T-cell (primary cell): ENCODE measurements at regions of chr1 and their contacts with region 1.

Region 1: GRCh38 chr1:181088079-181089016 is at the start of gene IER5:
- DNase-seq: peak; percentile 83 to 97 (median 89)
- ATAC-seq: peak; percentile 73 to 87 (median 82)
- H3K4me3 ChIP-seq: peak within 1 kb of the TSS; percentile 66 to 91
- H3K4me3 Mint-ChIP-seq: peak within 1 kb of the TSS; percentile 89 to 99 (median 96)
- H3K27ac ChIP-seq: peak within 1 kb of the TSS; percentile 96
- H3K27ac Mint-ChIP-seq: peak within 1 kb of the TSS; percentile 97 to 98
- H3K4me1 ChIP-seq: peaks cover 8 to 19% of the 10 kb centered on the region in 2 experiments
- H3K4me1 Mint-ChIP-seq: peaks cover 48 to 56% (median 51%) of the 10 kb centered on the region in 3 donors
- H3K27me3 ChIP-seq: no peaks in the 10 kb centered on the region
- H3K27me3 Mint-ChIP-seq: no peaks in the 10 kb centered on the region
- total RNA-seq, gene IER5: 26.6 to 85.5 (median 32.2) TPM

Region 2: GRCh38 chr1:179129702-179130473 is 1958.5 kb before region 1 on chr1:
- CTCF ChIA-PET with region 1: no interaction called
- POLR2A ChIA-PET with region 1: interaction called in 1 of 2 experiments, 18 read pairs
- DNase-seq: peak in 26 of 35 experiments; percentile 2 to 76 (median 18)
- ATAC-seq: peak; percentile 92 to 97 (median 96)
- H3K4me3 ChIP-seq: peak overlapping the region in 1 of 2 donors; percentile 49
- H3K4me3 Mint-ChIP-seq: peak overlapping the region; percentile 51 to 77 (median 62)
- H3K27ac ChIP-seq: peak overlapping the region; percentile 94
- H3K27ac Mint-ChIP-seq: peak overlapping the region; percentile 91 to 92
- H3K4me1 ChIP-seq: peaks cover 6 to 15% of the 10 kb centered on the region in 2 experiments
- H3K4me1 Mint-ChIP-seq: peaks cover 16 to 23% (median 20%) of the 10 kb centered on the region in 3 donors
- H3K27me3 ChIP-seq: no peaks in the 10 kb centered on the region
- H3K27me3 Mint-ChIP-seq: no peaks in the 10 kb centered on the region

Region 3: DNA sequence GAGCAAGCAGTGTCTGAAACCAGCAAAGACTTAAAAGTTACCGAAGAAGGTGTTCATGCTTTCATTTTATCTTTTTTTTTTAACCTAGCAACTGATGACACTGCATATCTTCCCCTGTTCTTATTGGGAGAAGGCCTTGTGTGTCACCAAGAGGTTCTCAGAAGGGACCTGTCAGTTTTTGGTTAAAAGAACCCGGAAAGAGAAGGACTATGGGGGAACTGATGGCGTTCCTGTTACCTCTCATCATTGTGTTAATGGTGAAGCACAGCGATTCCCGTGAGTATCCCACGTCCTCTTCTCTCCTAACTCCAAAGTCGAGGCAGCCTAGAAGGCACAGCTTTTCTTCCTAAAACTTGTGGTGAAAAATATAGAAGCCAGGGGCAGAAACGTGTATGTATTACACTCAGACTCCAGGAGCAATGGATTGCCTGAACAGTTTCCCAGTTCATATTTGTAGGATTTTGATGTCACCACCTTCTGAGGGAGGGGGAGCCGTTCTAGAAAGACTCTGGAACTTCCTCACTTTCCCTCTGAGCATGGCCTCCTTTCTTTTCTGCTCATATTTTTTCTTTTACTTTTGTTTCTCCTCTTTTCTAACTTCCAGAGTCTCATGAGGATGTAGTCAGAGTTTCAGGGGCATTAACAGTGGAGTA is 54.4 kb before region 1 on chr1 and contains the start of gene MR1:
- CTCF ChIA-PET with region 1: interaction called, 3 to 7 read pairs
- POLR2A ChIA-PET with region 1: interaction called, 3 to 17 read pairs
- DNase-seq: peak in 30 of 35 experiments; percentile 10 to 89 (median 32)
- ATAC-seq: peak; percentile 97 to 98 (median 98)
- H3K4me3 ChIP-seq: peak within 1 kb of the TSS; percentile 63 to 87
- H3K4me3 Mint-ChIP-seq: peak within 1 kb of the TSS; percentile 94 to 99 (median 95)
- H3K27ac ChIP-seq: peak within 1 kb of the TSS; percentile 94
- H3K27ac Mint-ChIP-seq: peak within 1 kb of the TSS; percentile 99 to 100
- H3K4me1 ChIP-seq: peaks cover 31 to 46% of the 10 kb centered on the region in 2 experiments
- H3K4me1 Mint-ChIP-seq: peaks cover 60 to 67% (median 60%) of the 10 kb centered on the region in 3 donors
- H3K27me3 ChIP-seq: no peaks in the 10 kb centered on the region
- H3K27me3 Mint-ChIP-seq: no peaks in the 10 kb centered on the region
- total RNA-seq, gene MR1: 18.3 to 30.7 (median 22.7) TPM

Region 4: GRCh38 chr1:181105134-181106021 is 17.0 kb after region 1 on chr1:
- CTCF ChIA-PET with region 1: interaction called, 9 to 33 read pairs
- POLR2A ChIA-PET with region 1: interaction called, 27 to 147 read pairs
- DNase-seq: peak; percentile 86 to 97 (median 92)
- ATAC-seq: peak; percentile 90 to 94 (median 92)
- H3K4me3 ChIP-seq: peak overlapping the region; percentile 58 to 83
- H3K4me3 Mint-ChIP-seq: peak overlapping the region; percentile 77 to 86 (median 85)
- H3K27ac ChIP-seq: peak overlapping the region; percentile 87
- H3K27ac Mint-ChIP-seq: peak overlapping the region; percentile 62 to 90
- H3K4me1 ChIP-seq: peaks cover 29 to 46% of the 10 kb centered on the region in 2 experiments
- H3K4me1 Mint-ChIP-seq: peaks cover 55 to 59% (median 58%) of the 10 kb centered on the region in 3 donors
- H3K27me3 ChIP-seq: peaks cover 0 to 11% of the 10 kb centered on the region in 2 experiments
- H3K27me3 Mint-ChIP-seq: peaks cover 0 to 5% of the 10 kb centered on the region in 2 donors

Region 5: GRCh38 chr1:181166377-181167196 is 78.2 kb after region 1 on chr1:
- CTCF ChIA-PET with region 1: interaction called, 4 to 13 read pairs
- POLR2A ChIA-PET with region 1: interaction called in 1 of 2 experiments, 3 read pairs
- DNase-seq: peak; percentile 35 to 87 (median 67)
- ATAC-seq: peak; percentile 98 to 99 (median 99)
- H3K4me3 ChIP-seq: no peak overlapping the region
- H3K4me3 Mint-ChIP-seq: peak overlapping the region; percentile 51 to 59 (median 52)
- H3K27ac ChIP-seq: no peak overlapping the region
- H3K27ac Mint-ChIP-seq: peak overlapping the region; percentile 69 to 82
- H3K4me1 ChIP-seq: peaks cover 0 to 9% of the 10 kb centered on the region in 2 experiments
- H3K4me1 Mint-ChIP-seq: peaks cover 5 to 8% (median 7%) of the 10 kb centered on the region in 3 donors
- H3K27me3 ChIP-seq: no peaks in the 10 kb centered on the region
- H3K27me3 Mint-ChIP-seq: no peaks in the 10 kb centered on the region